ACHN (cell line): ENCODE measurements at regions of chr17 and their contacts with region 1.

Region 1: DNA sequence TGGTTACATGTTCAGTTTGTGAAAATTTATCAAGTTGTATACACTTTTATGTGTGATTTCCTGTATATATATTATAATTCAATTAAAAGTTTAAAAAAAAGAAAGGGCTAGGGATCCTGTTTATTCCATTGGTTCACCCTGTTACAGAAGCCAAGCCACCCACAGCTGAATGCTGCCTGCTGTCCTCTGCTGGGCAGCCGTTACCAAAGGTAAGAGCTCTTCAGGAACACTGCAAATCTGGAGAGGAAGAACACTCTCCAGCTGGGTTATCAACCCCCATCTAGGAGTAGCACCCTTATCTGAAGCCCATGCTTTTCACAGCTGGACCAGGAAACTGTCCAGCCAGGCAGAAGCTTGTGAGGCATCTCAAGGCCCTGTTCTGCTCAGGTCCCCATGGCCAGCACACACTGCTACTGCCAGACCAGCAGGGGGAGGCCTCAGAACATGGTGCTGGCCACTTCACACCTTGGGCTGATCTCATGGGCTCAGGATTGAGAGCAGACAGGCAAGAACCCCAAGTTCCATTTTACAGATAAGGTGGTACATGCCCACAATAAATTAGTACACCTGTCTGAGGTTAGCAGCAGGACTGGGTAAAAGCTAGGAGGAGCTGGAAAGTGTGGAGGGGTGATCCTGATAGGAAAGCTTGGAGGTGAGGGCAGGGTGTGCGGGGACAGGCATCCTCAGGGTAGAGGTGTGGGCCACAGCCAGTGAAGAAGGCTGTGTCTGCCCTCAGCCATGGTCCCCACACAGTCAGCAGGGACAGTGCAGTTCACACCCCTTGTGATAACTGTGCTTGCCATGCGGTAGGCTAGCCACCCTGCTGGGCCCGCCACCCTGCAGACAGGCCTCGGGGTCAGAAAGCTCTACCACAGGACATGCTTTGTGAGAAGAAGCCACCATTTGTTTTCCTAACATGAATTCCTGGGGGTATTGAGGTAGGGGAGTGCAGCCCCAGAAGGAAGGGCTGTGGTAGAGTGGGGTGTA is 54.3 kb upstream of the SREBF1 start:
- DNase-seq: peak; percentile 76

Region 2: GRCh38 chr17:17675925-17676534 is 215.0 kb before region 1 on chr17:
- in situ Hi-C with region 1: no loop called
- DNase-seq: no peak

Region 3: DNA sequence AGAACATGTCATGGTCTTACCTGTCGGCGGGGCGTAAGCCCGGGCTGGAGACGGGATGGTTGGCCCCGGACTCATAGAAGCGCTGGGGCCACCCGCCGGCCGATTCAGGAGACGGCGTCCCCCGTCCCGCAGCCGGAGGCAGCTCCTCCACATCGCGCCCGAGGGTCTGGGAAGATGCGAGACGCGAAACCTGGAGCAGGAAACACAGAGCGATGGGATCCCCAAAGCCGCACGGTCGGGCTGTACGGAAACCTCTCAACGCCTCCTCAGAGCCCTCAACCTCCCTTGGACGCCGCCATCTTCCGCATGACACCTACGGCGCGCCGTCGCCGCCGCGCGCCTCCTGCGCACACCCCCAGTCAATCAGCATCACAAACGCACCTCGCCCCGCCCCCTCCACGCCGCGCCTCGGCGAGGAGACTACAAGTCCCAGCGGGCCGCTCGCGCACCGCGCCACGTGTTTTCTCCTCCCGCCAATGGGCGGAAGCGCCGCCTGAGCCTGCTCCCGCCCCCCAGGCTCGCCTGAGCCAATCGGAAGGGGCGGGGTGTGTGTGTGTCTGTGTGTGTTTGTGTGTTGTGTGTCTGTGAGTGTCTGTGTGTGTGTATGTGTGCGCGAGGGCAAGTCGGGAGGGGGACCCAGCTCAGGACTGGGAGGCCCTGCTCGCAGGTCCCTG is 147.9 kb after region 1 on chr17 and contains the starts of genes ATPAF2 and GID4:
- in situ Hi-C with region 1: loop called (anchors 10 kb)
- DNase-seq: peak; percentile 99